WTC11 (cell line): ENCODE measurements at regions of chr14 and their contacts with region 1.

Region 1: GRCh38 chr14:64986578-64987571 is at the start of gene FNTB:
- DNase-seq: peak; percentile 96
- ATAC-seq: peak; percentile 93
- H3K4me3 Mint-ChIP-seq: peak within 1 kb of the TSS; percentile 90
- H3K27ac Mint-ChIP-seq: peak within 1 kb of the TSS; percentile 99
- H3K4me1 Mint-ChIP-seq: peaks cover 18% of the 10 kb centered on the region
- H3K27me3 Mint-ChIP-seq: peaks cover 7% of the 10 kb centered on the region
- CTCF ChIP-seq: no peak
- total RNA-seq, gene FNTB: 14.2 to 18.2 TPM (median 17.3 TPM) in 3 replicates

Region 2: GRCh38 chr14:64515083-64515482 is 471.8 kb before region 1 on chr14:
- CTCF ChIA-PET with region 1: no interaction called
- POLR2A ChIA-PET with region 1: no interaction called
- DNase-seq: no peak
- ATAC-seq: no peak
- H3K4me3 Mint-ChIP-seq: no peak overlapping the region
- H3K27ac Mint-ChIP-seq: no peak overlapping the region
- H3K4me1 Mint-ChIP-seq: peaks cover 16% of the 10 kb centered on the region
- H3K27me3 Mint-ChIP-seq: no peaks in the 10 kb centered on the region
- CTCF ChIP-seq: no peak

Region 3: GRCh38 chr14:64845878-64846277 is 141.0 kb before region 1 on chr14:
- CTCF ChIA-PET with region 1: no interaction called
- POLR2A ChIA-PET with region 1: no interaction called
- DNase-seq: no peak
- ATAC-seq: no peak
- H3K4me3 Mint-ChIP-seq: no peak overlapping the region
- H3K27ac Mint-ChIP-seq: no peak overlapping the region
- H3K4me1 Mint-ChIP-seq: peaks cover 29% of the 10 kb centered on the region
- H3K27me3 Mint-ChIP-seq: no peaks in the 10 kb centered on the region; the same call in 1 of the 2 replicates
- CTCF ChIP-seq: no peak

Region 4: GRCh38 chr14:64952598-64953309 is 34.1 kb before region 1 on chr14:
- CTCF ChIA-PET with region 1: interaction called, 13 read pairs
- POLR2A ChIA-PET with region 1: interaction called, 3 read pairs
- DNase-seq: no peak
- ATAC-seq: peak; percentile 76
- H3K4me3 Mint-ChIP-seq: no peak overlapping the region
- H3K27ac Mint-ChIP-seq: no peak overlapping the region
- H3K4me1 Mint-ChIP-seq: peaks cover 37% of the 10 kb centered on the region
- H3K27me3 Mint-ChIP-seq: no peaks in the 10 kb centered on the region
- CTCF ChIP-seq: no peak

Region 5: DNA sequence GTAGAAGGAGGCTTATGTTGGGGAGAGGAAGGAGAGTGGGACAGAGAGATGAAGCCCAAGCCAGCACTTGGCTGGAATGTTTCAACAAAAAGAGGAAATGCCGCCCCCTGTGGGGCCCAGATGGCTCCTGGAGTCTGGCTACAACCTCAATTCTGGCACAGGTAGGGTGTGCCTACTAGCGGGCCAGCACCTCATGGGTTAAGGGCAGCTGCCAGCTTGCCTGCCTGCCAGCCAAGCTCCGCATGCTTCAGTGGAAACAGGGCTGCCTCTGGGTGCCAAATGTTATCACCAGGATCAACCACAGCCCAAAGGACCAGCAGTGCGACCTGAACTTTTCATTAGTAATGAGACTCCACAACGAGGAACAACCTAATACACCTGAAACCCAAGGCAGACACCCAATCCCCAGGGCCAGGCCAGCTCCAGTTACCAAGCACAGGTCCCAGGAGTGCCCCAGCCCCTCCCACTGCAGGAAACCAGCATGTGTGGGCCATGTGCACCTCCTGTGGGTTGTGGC is 26.1 kb before region 1 on chr14:
- CTCF ChIA-PET with region 1: interaction called, 12 read pairs
- POLR2A ChIA-PET with region 1: interaction called, 3 read pairs
- DNase-seq: peak; percentile 66
- ATAC-seq: peak; percentile 79
- H3K4me3 Mint-ChIP-seq: no peak overlapping the region
- H3K27ac Mint-ChIP-seq: no peak overlapping the region; the same call in 1 of the 2 replicates
- H3K4me1 Mint-ChIP-seq: peaks cover 40% of the 10 kb centered on the region
- H3K27me3 Mint-ChIP-seq: no peaks in the 10 kb centered on the region
- CTCF ChIP-seq: peak; percentile 10; the same call in 1 of the 2 replicates

Region 6: GRCh38 chr14:64971943-64972791 is 14.7 kb before region 1 on chr14 and contains the start of gene RAB15:
- CTCF ChIA-PET with region 1: interaction called, 21 read pairs
- POLR2A ChIA-PET with region 1: no interaction called
- DNase-seq: peak; percentile 43
- ATAC-seq: peak; percentile 62
- H3K4me3 Mint-ChIP-seq: peak within 1 kb of the TSS; percentile 78
- H3K27ac Mint-ChIP-seq: no peak within 1 kb of the TSS
- H3K4me1 Mint-ChIP-seq: peaks cover 72% of the 10 kb centered on the region
- H3K27me3 Mint-ChIP-seq: no peaks in the 10 kb centered on the region; the same call in 1 of the 2 replicates
- CTCF ChIP-seq: no peak
- total RNA-seq, gene RAB15: 38.4 to 49.1 TPM (median 38.6 TPM) in 3 replicates

Region 7: GRCh38 chr14:65019944-65020566 is 33.2 kb after region 1 on chr14:
- CTCF ChIA-PET with region 1: interaction called, 29 read pairs
- POLR2A ChIA-PET with region 1: no interaction called
- DNase-seq: no peak
- ATAC-seq: peak; percentile 87
- H3K4me3 Mint-ChIP-seq: no peak overlapping the region
- H3K27ac Mint-ChIP-seq: no peak overlapping the region
- H3K4me1 Mint-ChIP-seq: peaks cover 3% of the 10 kb centered on the region; the same call in 1 of the 2 replicates
- H3K27me3 Mint-ChIP-seq: no peaks in the 10 kb centered on the region
- CTCF ChIP-seq: 0 out of 2 replicates have a peak, but pooled peaks have one; percentile 20

Region 8: DNA sequence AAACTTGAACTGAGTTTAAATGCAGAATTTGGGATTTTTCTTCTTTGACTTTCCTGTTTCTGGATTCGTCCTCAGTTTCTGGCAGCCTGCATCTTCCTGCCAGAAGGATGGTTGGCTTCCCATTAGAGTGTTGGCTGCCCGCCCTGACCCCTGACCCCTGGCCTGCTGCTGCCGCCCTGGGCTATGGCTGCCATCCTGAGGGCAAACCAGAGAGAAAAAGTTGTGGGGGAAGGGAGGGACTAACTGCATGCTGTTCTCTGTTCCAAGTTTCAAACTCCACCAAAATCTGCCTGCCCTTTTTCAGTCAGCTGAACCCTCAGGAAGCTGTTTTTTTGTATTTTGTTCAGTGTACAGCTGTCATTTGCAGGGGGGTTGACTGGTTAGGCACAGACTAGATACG is 48.2 kb after region 1 on chr14:
- CTCF ChIA-PET with region 1: no interaction called
- POLR2A ChIA-PET with region 1: no interaction called
- DNase-seq: no peak
- ATAC-seq: no peak
- H3K4me3 Mint-ChIP-seq: no peak overlapping the region
- H3K27ac Mint-ChIP-seq: no peak overlapping the region
- H3K4me1 Mint-ChIP-seq: no peaks in the 10 kb centered on the region
- H3K27me3 Mint-ChIP-seq: no peaks in the 10 kb centered on the region
- CTCF ChIP-seq: no peak

Region 9: GRCh38 chr14:65102441-65103149 is 115.7 kb after region 1 on chr14 and contains the start of gene MAX:
- CTCF ChIA-PET with region 1: interaction called, 14 read pairs
- POLR2A ChIA-PET with region 1: interaction called, 5 read pairs
- DNase-seq: peak; percentile 96
- ATAC-seq: peak; percentile 90
- H3K4me3 Mint-ChIP-seq: peak within 1 kb of the TSS; percentile 89
- H3K27ac Mint-ChIP-seq: peak within 1 kb of the TSS; percentile 98
- H3K4me1 Mint-ChIP-seq: peaks cover 16% of the 10 kb centered on the region
- H3K27me3 Mint-ChIP-seq: no peaks in the 10 kb centered on the region
- CTCF ChIP-seq: no peak
- total RNA-seq, gene MAX: 51.2 to 58.5 TPM (median 57.6 TPM) in 3 replicates